ENCODE measurements at regions of chr7 and their contacts with region 1.

Region 1: GRCh38 chr7:130486114-130486958 is 5.5 kb upstream of the MEST start:
- DNase-seq: peak in 7 of 10 donors; percentile 32 to 67 (median 49)
- H3K4me3 ChIP-seq: peak overlapping the region; percentile 41 to 81 (median 61)
- H3K27ac ChIP-seq: peak overlapping the region in 49 of 59 donors; percentile 4 to 85 (median 55)
- H3K27me3 ChIP-seq: peaks cover 0 to 2% (median 0%) of the 10 kb centered on the region in 45 donors
- CTCF ChIP-seq: peak; percentile 35 to 77 (median 63)

Region 2: DNA sequence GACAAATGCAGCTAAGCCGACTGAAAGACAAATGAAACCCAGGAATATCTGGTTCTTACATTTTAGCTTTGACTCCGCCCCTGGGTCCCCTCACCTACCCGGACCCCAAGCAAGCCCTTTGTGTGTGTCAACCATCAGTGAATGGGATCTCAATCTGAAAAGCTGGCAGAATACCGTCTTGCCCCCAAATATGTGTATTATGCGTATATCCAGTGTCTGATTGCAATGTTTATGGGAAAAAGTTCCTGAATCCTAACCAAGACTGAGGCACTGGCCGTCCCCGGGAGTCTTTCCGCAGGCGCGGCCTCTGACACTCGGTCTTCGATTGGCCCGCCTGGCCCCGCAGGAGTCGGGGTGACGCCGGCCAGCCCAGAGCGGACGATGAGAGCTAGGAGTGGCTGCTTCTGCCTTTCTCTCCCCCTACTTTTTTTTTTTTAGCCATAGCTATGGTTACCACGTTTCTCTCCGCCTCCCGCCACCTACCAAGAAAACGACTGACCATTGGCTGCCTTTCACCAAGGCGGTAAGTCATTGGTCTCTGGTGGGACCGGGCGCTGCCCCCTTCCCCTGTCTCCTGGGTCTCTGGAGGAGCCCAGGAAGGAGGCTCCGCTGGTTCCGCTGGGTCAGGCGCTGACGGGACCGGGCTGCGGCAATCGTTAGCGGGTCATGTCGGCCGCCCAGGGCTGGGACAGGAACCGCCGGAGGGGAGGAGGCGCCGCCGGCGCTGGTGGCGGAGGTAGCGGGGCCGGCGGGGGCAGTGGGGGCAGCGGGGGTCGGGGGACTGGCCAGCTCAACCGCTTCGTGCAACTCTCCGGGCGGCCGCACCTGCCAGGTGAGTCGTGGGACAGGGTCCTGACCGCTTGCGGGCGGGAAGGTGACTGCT is 416.1 kb before region 1 on chr7 and contains the start of gene KLHDC10:
- intact Hi-C with region 1: loop called (anchors 5 kb)
- DNase-seq: peak; percentile 90 to 98 (median 96)
- H3K4me3 ChIP-seq: peak within 1 kb of the TSS; percentile 65 to 99 (median 90)
- H3K27ac ChIP-seq: peak within 1 kb of the TSS; percentile 29 to 95 (median 87)
- H3K27me3 ChIP-seq: peaks cover 0 to 2% (median 0%) of the 10 kb centered on the region in 45 donors
- CTCF ChIP-seq: peak in 35 of 56 donors; percentile 6 to 66 (median 33)
- total RNA-seq, gene KLHDC10: 32.2 to 63.0 (median 45.7) TPM

Region 3: GRCh38 chr7:130205084-130205947 is 281.0 kb before region 1 on chr7 and contains the start of gene TMEM209:
- intact Hi-C with region 1: loop called in 1 of 2 experiments (anchors 10 kb)
- DNase-seq: peak; percentile 89 to 96 (median 95)
- H3K4me3 ChIP-seq: peak within 1 kb of the TSS; percentile 55 to 97 (median 81)
- H3K27ac ChIP-seq: peak within 1 kb of the TSS in 58 of 59 donors; percentile 53 to 95 (median 90)
- H3K27me3 ChIP-seq: no peaks in the 10 kb centered on the region
- CTCF ChIP-seq: peak in 35 of 56 donors; percentile 4 to 58 (median 26)
- total RNA-seq, gene TMEM209: 9.8 to 28.0 (median 15.9) TPM

Region 4: GRCh38 chr7:130277763-130278643 is 208.3 kb before region 1 on chr7:
- intact Hi-C with region 1: loop called (anchors 5 to 10 kb)
- DNase-seq: peak in 8 of 10 donors; percentile 43 to 74 (median 64)
- H3K4me3 ChIP-seq: no peak overlapping the region
- H3K27ac ChIP-seq: peak overlapping the region in 54 of 59 donors; percentile 2 to 83 (median 60)
- H3K27me3 ChIP-seq: peaks cover 0 to 2% (median 0%) of the 10 kb centered on the region in 45 donors
- CTCF ChIP-seq: peak in 55 of 56 donors; percentile 28 to 81 (median 66)

Region 5: GRCh38 chr7:130322587-130322986 is 163.7 kb before region 1 on chr7:
- intact Hi-C with region 1: no loop called
- DNase-seq: no peak
- H3K4me3 ChIP-seq: no peak overlapping the region
- H3K27ac ChIP-seq: no peak overlapping the region
- H3K27me3 ChIP-seq: no peaks in the 10 kb centered on the region
- CTCF ChIP-seq: no peak

Region 6: GRCh38 chr7:130365511-130366441 is 120.6 kb before region 1 on chr7:
- intact Hi-C with region 1: no loop called
- DNase-seq: peak in 5 of 10 donors; percentile 36 to 60 (median 46)
- H3K4me3 ChIP-seq: no peak overlapping the region
- H3K27ac ChIP-seq: peak overlapping the region in 4 of 59 donors; percentile 13 to 57 (median 36)
- H3K27me3 ChIP-seq: no peaks in the 10 kb centered on the region
- CTCF ChIP-seq: no peak

Region 7: GRCh38 chr7:130429019-130429418 is 57.3 kb before region 1 on chr7:
- intact Hi-C with region 1: no loop called
- DNase-seq: no peak
- H3K4me3 ChIP-seq: no peak overlapping the region
- H3K27ac ChIP-seq: peak overlapping the region in 7 of 59 donors; percentile 20 to 80 (median 70)
- H3K27me3 ChIP-seq: no peaks in the 10 kb centered on the region
- CTCF ChIP-seq: no peak

Region 8: DNA sequence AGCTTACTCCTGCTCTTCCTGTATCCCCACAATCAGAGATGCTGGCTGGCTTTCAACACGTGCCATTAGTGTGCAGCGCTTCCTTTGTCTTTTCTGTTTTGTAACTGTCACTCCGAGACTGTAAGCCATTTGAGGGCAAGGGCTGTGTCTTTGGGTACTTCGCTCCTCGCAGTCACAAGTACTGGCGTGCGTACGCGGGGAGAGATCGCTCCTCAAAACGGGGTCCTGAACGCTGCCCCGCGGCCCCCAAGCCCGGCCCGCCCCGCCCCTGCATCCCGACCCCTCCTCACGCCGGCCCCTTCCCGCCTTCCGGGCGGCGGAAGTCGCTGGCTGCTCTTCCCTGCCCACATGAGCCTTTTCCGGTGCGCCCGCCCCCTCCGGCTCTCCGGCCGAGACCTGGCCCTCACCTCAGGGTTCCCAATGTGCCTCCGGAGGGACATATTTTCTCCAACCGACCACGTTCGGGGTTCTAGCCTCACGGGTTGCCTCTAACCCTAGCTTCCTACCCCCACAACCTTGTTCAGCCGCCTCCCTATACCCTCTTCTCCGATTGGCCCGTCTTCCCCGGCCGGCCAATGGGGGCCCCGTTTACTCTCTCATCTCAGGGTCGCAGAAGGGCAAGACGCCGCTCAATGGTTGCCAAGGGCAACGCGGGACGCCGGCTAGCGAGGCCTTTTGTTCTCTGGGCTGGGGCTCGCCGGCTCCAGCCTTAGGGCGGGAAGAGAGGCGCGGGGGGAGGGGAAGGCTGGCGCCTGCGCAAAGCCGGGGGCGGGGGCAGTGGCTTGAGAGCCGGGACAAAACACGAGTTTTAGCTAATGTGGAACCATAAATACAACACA is 45.6 kb before region 1 on chr7 and contains the start of gene CEP41:
- intact Hi-C with region 1: loop called (anchors 5 kb)
- DNase-seq: peak; percentile 97 to 99 (median 98)
- H3K4me3 ChIP-seq: peak within 1 kb of the TSS; percentile 48 to 91 (median 78)
- H3K27ac ChIP-seq: peak within 1 kb of the TSS; percentile 36 to 96 (median 82)
- H3K27me3 ChIP-seq: no peaks in the 10 kb centered on the region
- CTCF ChIP-seq: peak in 19 of 56 donors; percentile 5 to 43 (median 19)
- total RNA-seq, gene CEP41: 10.4 to 41.3 (median 27.0) TPM

Region 9: DNA sequence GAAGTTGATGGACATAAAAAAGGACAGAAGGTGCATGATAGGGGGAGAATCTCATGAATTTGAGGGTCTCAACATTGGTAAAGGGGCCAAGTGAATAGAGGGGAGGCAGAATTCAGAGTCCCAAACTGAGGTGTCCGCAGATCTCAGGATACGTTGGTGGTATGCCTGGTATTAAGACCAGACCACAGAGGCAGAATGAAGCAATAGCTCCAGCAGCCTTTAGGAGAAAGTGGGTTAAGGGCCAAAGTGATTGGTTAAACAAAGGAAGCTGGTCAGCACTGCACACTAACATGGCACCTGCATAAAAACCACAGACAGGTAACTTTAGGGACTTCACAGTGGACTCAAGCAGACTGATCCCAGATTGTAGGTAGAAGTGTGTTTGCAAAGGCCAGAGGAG is 43.1 kb after region 1 on chr7:
- intact Hi-C with region 1: no loop called
- DNase-seq: no peak
- H3K4me3 ChIP-seq: no peak overlapping the region
- H3K27ac ChIP-seq: no peak overlapping the region
- H3K27me3 ChIP-seq: no peaks in the 10 kb centered on the region
- CTCF ChIP-seq: no peak

Region 10: GRCh38 chr7:130668257-130669084 is 182.1 kb after region 1 on chr7 and contains the start of gene COPG2:
- intact Hi-C with region 1: loop called in 1 of 2 experiments (anchors 10 kb)
- DNase-seq: peak; percentile 58 to 91 (median 77)
- H3K4me3 ChIP-seq: peak within 1 kb of the TSS; percentile 50 to 96 (median 84)
- H3K27ac ChIP-seq: peak within 1 kb of the TSS in 58 of 59 donors; percentile 17 to 95 (median 86)
- H3K27me3 ChIP-seq: no peaks in the 10 kb centered on the region
- CTCF ChIP-seq: peak in 23 of 56 donors; percentile 6 to 34 (median 20)
- total RNA-seq, gene COPG2: 14.0 to 31.9 (median 23.5) TPM

Measured in dorsolateral prefrontal cortex (tissue), 120 donors.